ENCODE measurements at regions of chr1 and their contacts with region 1.

Region 1: DNA sequence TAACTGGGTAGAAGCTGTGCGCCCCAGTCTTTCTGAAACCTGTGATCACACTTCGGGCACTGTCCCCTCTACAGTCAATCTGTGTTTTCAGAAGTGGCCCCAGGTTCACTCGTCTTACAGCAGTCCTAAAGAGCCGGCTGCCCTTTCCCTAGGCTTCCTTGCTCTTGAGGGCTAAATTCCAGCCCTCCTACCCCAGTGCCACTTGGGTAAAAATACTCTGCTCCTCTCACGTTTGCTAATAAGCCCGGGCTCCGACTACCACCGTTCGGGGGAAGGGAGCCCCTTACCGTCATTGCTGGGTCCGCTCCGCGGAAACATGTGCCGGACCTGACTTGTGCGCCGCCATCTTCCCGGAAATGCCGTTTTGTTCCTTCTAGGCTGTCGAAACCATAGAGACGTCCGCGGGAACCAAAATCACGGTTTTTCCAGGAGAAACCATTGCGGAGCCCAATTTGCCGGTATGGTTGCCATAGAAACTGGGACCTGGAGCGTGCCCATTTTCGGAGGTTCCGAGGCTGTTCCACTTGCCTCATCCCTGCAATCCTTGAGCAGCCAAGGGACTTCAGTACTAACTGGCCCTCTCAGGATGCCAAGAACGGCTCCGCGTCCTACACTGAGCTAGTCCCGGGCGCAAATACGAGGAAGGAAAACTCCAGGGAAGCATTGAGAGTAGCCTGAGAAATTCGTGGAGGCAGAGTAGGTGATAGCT is at the start of gene GPATCH4:
- DNase-seq: peak; percentile 78 to 95 (median 88)

Region 2: DNA sequence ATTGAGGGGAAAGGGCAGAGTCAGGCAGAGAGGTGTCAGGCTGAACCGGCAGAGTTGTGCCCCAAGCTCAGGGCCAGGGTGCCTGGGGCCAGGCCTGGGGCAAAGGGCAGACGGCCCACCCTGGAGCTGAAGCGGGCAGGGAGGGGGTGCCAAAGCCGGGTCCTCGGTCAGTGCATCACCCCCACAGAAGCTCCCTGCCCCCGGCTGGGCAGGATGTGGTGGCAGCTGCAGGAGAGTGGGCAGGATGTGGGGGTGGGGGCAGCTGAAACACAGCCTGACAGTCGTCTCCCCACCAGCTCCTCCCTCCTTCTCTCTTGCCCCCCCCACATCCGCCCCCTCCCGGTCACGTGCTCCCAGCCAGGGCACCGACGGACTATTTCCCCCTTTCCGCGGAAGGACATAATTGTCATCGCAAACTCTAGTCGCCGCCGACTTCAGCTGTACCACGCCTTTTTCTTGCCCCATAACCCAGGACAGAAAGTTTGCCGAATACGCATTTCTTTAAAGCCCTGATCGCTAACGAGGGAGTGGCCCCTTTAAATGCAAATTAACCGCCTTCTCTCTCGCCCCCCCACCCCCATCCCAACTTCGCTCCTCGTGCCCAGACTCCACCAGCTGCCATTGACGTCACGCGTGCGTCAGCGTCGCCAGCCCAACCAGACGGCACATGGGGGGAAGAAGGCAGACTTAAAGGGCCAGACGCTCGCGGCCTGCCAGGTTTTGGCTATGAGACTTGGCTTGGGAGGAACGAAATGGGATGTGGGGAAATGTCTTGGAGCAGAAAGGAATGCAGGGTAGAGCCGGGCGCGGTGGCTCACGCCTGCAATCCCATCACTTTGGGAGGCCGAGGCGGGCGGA is 96.2 kb before region 1 on chr1:
- intact Hi-C with region 1: loop called (anchors 5 kb)
- DNase-seq: peak; percentile 97 to 100 (median 99)

Region 3: GRCh38 chr1:156533568-156534215 is 67.6 kb before region 1 on chr1:
- intact Hi-C with region 1: no loop called
- DNase-seq: no peak

Region 4: DNA sequence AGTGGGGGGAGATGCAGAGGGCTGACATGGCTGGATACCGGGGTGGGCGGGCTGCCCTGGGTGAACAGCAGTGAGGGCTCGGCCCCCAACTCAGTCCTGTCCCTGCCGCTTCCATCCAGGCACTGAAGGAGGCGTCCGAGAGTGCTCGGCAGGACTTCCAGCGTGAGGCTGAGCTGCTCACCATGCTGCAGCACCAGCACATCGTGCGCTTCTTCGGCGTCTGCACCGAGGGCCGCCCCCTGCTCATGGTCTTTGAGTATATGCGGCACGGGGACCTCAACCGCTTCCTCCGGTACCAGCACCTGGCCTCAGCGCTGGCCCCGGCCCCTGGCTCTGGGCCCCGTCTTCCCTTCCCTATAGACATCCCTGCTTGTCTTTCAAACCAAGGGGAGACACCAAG is 275.0 kb after region 1 on chr1:
- intact Hi-C with region 1: no loop called
- DNase-seq: no peak